HEK293 (cell line): ENCODE measurements at regions of chr1 and their contacts with region 1.

Region 1: GRCh38 chr1:205485338-205486228 is 18.9 kb upstream of the CDK18 start:
- H3K4me3 ChIP-seq: no peak overlapping the region
- H3K27ac ChIP-seq: no peak overlapping the region
- H3K4me1 ChIP-seq: no peaks in the 10 kb centered on the region
- CTCF ChIP-seq: peak; percentile 94

Region 2: GRCh38 chr1:205354259-205354904 is 131.2 kb before region 1 on chr1:
- CTCF ChIA-PET with region 1: interaction called, 36 read pairs
- POLR2A ChIA-PET with region 1: interaction called, 3 read pairs
- H3K4me3 ChIP-seq: no peak overlapping the region
- H3K27ac ChIP-seq: no peak overlapping the region
- H3K4me1 ChIP-seq: no peaks in the 10 kb centered on the region; the same call in 1 of the 2 replicates
- CTCF ChIP-seq: no peak; the same call in 1 of the 2 replicates

Region 3: DNA sequence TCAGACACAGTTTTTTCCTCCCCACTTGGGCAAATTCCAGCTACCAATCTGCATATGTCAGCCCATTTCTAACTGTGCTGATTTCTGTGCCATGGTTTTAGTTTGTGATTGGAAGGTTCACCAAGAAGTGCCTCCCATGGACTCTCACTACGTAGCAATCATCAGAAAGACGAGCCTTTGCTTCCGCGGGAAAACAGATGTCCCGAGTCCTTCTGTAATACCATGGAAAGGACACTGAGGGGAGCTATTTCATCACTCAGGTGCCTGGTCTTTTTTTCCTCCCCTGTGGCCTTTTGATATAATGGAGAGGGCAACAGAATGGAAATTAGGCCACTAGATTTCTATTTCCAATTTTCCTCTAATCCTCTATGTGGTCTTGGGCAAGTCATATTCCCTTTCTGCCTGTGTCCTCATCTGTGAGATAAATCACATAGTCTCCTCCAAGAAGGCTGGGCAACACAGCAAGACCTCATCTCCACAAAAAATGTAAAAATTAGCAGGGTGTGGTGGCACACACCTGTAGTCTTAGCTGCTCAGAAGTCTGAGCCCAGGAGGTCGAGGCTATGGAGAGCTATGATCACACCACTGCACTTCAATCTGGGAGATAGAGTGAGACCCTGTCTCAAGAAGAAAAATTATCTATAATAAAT is 88.5 kb before region 1 on chr1:
- CTCF ChIA-PET with region 1: interaction called, 201 read pairs
- POLR2A ChIA-PET with region 1: no interaction called
- H3K4me3 ChIP-seq: no peak overlapping the region
- H3K27ac ChIP-seq: no peak overlapping the region
- H3K4me1 ChIP-seq: no peaks in the 10 kb centered on the region
- CTCF ChIP-seq: peak; percentile 81

Region 4: DNA sequence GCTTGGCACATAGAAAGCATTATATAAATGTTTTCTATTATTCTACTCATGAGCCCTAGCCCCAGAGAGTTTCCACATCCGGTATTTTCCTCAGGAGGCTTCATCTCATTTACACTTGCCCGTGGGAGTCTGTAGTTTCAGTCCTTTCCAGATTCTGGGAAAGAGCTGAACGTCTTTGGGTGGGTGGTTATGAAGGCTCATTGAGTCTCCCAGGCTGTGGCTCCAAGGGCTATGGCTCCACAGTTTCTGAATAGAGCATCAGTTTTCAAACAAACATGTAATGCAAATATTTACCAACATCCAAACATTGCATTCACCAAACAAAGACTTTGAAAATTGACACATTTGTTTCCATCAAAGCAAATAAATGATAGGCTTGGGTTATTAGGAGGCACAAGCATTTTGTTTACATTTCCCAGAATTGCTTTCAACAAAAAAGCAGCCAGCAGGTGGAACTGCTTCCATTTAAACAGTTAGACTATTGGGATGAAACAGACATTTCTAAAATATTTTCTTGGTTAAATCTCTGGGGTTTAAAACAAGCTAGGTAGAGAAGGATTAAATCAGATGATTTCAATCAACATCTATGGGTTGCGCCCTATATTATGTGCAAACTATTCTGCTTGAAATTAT is 62.5 kb before region 1 on chr1:
- CTCF ChIA-PET with region 1: interaction called, 50 read pairs
- POLR2A ChIA-PET with region 1: no interaction called
- H3K4me3 ChIP-seq: no peak overlapping the region
- H3K27ac ChIP-seq: no peak overlapping the region
- H3K4me1 ChIP-seq: peaks cover 5% of the 10 kb centered on the region; the same call in 1 of the 2 replicates
- CTCF ChIP-seq: no peak

Region 5: DNA sequence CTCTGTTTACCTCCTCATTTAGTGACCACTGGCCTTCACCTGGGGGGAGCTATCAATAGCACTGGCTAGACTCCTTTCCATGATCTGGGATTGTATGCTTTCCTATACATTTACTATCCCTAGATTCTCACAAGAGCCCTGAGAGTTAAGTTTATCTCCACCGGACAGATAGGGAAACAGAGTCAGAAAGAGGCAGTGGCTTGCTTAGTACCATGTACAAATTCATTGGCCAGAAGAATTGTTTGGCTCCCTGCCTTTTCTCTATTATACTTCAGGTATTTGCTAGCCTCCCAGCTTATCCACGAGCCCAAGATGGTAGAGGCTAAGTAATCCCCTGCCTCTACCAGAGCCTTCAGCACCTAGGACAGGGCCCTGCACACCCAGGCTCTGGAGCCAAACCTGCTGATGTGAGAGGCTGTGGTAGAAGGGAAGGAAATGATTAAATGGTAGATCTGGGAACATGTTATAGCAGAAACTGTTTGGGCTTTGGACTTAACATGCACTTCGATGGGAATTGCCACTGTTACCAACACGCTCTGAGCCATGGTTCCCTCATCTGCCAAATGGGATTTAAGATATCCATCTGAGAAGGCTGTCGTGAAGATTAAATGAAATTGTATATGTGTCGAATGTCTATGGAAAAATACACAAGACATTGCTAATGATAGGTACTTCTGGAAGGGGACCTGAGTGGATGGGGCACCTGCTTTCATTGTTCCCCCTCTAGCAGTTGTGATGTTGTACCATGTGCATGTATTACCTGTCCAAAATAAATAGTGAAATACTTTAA is 26.6 kb before region 1 on chr1:
- CTCF ChIA-PET with region 1: interaction called, 24 read pairs
- POLR2A ChIA-PET with region 1: no interaction called
- H3K4me3 ChIP-seq: no peak overlapping the region
- H3K27ac ChIP-seq: no peak overlapping the region
- H3K4me1 ChIP-seq: no peaks in the 10 kb centered on the region; the same call in 1 of the 2 replicates
- CTCF ChIP-seq: no peak

Region 6: DNA sequence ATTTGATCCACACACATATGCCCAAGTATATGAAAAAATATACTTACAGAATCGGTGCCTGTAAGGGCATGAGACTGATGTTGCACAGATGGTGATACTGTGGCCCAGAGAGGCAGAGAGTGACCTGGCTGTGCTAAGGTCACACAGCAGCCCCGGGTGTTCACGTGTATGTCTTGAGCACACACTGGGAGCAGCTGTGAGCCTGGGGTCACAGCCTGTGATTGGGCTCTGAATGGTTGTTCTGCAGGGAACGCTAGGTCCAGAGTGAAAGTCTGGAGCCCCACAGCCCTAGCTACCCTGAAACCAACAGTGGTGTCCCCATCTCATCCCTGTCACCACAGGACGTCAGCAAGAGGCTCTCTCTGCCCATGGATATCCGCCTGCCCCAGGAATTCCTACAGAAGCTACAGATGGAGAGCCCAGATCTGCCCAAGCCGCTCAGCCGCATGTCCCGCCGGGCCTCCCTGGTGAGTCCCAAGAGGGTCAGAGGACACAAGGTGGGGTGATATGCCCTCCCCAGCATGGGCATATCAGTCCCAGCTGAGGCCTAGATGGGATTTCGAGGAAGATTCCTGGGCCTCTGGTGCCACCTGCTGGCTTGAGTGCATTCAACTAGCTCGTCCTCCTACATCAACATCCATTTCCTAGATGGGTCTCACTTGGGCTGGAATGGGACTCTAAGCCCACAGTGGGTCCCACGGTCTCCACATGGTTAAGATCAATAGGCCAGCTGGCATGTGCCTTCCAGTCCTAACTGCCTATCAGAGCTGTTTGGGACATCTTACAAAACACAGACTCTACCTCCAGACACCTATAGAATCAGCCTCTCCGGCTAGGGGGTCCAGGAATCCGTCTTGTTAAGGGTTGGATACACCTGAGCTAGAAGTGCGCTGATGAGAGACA is 38.6 kb after region 1 on chr1:
- CTCF ChIA-PET with region 1: interaction called, 459 read pairs
- POLR2A ChIA-PET with region 1: interaction called, 7 read pairs
- H3K4me3 ChIP-seq: no peak overlapping the region
- H3K27ac ChIP-seq: no peak overlapping the region
- H3K4me1 ChIP-seq: peaks cover 8% of the 10 kb centered on the region
- CTCF ChIP-seq: peak; percentile 91

Region 7: DNA sequence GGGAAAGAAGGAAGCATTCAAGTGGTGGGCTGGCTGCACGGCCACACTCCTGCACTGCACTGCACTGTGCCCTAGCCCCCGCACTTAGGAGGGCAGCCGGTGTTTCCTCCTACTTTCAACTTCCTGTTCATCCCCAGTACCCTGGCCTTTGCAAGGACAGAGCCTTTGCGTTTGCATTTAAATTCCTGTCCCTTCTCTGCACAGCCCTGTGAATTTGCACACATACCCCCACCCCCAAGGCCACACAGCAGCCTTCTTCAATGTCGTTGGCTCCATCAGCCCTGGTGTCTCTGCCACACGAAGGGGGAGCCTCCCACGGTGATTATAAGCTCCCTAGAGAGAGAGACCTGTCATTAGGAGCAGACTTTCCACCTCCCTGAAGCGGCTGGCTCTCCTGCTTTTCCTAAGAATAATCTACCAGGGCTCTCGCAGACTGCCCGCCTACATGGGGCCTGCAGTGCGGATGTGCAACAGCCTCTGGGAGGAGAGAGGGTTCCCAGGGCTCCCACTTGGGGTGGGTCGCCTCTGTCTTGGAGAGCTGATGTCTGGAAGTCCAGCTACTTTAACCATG is 207.9 kb after region 1 on chr1:
- CTCF ChIA-PET with region 1: interaction called, 10 read pairs
- POLR2A ChIA-PET with region 1: no interaction called
- H3K4me3 ChIP-seq: no peak overlapping the region
- H3K27ac ChIP-seq: no peak overlapping the region
- H3K4me1 ChIP-seq: no peaks in the 10 kb centered on the region
- CTCF ChIP-seq: no peak

Region 8: GRCh38 chr1:205824180-205824579 is 338.6 kb after region 1 on chr1:
- CTCF ChIA-PET with region 1: no interaction called
- POLR2A ChIA-PET with region 1: no interaction called
- H3K4me3 ChIP-seq: no peak overlapping the region
- H3K27ac ChIP-seq: no peak overlapping the region
- H3K4me1 ChIP-seq: no peaks in the 10 kb centered on the region
- CTCF ChIP-seq: no peak